ENCODE measurements at regions of chr16 and their contacts with region 1.

Region 1: GRCh38 chr16:1959269-1960049 is at the start of gene NDUFB10:
- DNase-seq: peak; percentile 96
- ATAC-seq: peak; percentile 93
- total RNA-seq, gene NDUFB10: 737 TPM

Region 2: DNA sequence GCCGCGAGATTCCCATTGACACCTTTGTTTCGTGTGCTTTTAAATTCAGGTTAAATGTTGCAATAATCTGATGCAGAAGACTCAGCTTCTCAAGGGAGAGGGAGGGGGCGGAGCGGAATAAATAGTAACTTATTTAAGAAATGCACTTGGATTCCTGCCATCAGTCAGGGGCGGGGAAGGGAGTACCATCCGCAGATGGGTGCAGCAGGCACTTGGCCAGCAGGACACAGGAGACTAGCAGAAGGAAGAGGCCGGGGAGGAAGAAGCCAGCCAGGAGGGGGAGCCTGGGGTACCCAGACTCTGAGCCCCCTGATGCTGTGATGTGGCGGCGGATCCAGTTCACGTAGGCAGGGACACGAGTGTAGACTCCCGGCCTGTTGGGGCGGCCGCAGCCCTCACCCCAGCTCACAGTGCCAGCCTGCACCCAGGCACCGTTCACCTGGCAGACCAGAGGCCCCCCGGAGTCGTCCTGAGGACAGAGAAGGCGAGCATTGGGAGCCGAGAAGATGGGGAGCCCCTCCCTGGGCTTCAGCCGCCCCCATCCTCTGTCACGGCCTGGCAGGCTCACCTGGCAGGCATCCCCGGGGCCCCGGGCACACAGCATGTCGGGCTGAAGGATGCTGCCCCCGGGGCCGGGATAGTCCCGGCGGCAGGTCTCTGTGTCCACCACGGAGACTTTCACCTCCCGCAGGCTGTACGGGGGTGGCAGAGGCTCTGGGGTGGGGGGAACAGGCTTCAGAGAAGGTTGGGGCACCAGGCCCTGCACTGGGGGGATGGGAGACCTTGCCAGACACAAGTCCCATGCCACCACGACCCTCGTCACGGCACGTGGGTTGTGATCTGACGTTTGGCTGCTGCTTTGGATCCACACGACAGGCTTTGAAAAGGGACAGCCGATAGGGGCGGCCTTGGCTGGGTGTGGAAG is 737.6 kb before region 1 on chr16:
- intact Hi-C with region 1: no loop called
- DNase-seq: no peak
- ATAC-seq: no peak

Region 3: DNA sequence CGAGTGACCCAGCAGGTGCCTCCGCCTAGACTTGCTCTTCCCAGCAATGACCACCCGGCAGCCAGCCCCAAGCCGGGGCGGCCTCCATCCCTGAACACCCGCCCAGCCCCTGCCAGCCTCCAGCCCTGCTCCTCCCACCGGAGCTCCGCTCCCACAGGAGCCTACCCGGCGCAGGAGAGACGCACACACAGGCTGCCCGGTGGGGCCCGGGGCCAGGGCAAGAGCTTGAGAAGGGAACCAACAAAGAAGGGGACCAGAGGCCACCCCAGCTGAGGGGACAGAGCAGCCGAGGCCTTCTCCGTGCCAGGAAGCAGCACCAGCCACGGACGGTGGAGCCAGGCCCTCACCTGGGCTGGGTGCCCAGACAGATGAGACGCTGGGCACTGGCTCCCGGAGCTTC is 162.4 kb after region 1 on chr16:
- intact Hi-C with region 1: no loop called
- DNase-seq: no peak
- ATAC-seq: peak; percentile 26

Region 4: GRCh38 chr16:2213817-2214720 is 254.6 kb after region 1 on chr16:
- intact Hi-C with region 1: loop called (anchors 5 kb)
- DNase-seq: no peak
- ATAC-seq: no peak

Measured in Right ventricle myocardium inferior (tissue), 1 donor.